ENCODE measurements at regions of chr14 and their contacts with region 1.

Region 1: DNA sequence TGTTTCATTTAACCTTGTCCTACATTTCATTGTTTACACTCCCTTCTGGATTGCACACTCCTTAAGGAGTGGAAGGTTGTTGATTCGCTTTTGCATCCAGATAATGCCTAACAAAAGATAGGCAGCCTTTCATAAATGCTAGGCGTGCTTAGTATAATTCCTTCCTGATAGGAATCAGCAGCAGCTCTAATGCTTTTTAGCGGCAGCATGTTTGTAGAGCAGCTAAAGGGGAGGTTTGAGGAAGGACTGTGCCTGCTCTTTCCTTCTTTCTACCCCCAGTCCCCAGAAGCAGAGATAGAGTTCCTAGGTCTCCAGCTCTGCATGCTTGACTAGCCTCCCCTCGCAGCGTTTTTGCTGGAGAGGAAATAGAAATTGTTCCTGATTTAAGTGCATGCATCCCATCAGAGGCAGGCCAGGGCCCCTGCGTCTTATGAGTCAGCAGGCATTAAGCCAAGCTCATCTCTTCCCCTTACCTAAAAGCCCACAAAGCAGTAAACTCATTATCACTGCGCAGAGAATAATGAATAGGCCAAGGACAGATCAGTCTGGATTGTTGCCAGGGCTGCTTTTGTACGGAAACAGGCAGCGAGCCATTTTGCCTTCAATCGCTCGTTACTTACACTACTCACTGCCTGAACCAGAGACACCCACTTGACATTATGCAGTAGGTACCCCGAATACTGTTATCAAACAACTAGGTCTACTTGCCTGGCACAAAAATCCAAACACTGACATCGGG is 14.0 kb upstream of the TBPL2 start:
- DNase-seq: no peak
- H3K4me3 Mint-ChIP-seq: no peak overlapping the region
- H3K27ac Mint-ChIP-seq: no peak overlapping the region
- H3K4me1 Mint-ChIP-seq: peaks cover 16% of the 10 kb centered on the region
- H3K27me3 Mint-ChIP-seq: peaks cover 13% of the 10 kb centered on the region

Region 2: GRCh38 chr14:55482936-55483605 is 28.6 kb after region 1 on chr14:
- CTCF ChIA-PET with region 1: no interaction called
- POLR2A ChIA-PET with region 1: no interaction called
- intact Hi-C with region 1: no loop called
- DNase-seq: no peak
- H3K4me3 Mint-ChIP-seq: no peak overlapping the region
- H3K27ac Mint-ChIP-seq: no peak overlapping the region
- H3K4me1 Mint-ChIP-seq: no peaks in the 10 kb centered on the region
- H3K27me3 Mint-ChIP-seq: no peaks in the 10 kb centered on the region

Region 3: DNA sequence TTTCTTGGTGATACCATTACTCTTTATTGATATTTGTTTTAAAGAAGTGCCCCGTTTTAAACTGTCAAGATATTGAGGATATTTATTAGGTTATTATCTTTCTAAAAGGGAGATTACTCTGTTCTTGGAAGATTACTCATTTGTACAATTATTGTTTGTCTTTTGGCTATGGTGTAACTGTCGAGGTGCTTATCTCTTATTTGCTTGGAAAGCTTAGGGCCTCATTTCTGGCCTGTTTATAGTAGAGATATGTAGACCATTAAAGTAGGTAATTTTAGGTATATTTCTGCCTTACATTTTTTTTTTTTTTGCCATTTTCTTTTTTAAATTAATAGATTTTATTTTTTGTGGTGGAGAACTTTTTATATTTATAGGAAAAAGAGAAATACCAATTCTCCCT is 199.8 kb after region 1 on chr14:
- CTCF ChIA-PET with region 1: no interaction called
- POLR2A ChIA-PET with region 1: no interaction called
- intact Hi-C with region 1: no loop called
- DNase-seq: no peak
- H3K4me3 Mint-ChIP-seq: no peak overlapping the region
- H3K27ac Mint-ChIP-seq: no peak overlapping the region
- H3K4me1 Mint-ChIP-seq: peaks cover 11% of the 10 kb centered on the region
- H3K27me3 Mint-ChIP-seq: no peaks in the 10 kb centered on the region

Region 4: GRCh38 chr14:55665067-55665675 is 210.7 kb after region 1 on chr14:
- CTCF ChIA-PET with region 1: interaction called, 3 read pairs
- POLR2A ChIA-PET with region 1: no interaction called
- intact Hi-C with region 1: loop called (anchors 1 kb)
- DNase-seq: no peak
- H3K4me3 Mint-ChIP-seq: no peak overlapping the region
- H3K27ac Mint-ChIP-seq: no peak overlapping the region
- H3K4me1 Mint-ChIP-seq: peaks cover 25% of the 10 kb centered on the region
- H3K27me3 Mint-ChIP-seq: no peaks in the 10 kb centered on the region

Region 5: DNA sequence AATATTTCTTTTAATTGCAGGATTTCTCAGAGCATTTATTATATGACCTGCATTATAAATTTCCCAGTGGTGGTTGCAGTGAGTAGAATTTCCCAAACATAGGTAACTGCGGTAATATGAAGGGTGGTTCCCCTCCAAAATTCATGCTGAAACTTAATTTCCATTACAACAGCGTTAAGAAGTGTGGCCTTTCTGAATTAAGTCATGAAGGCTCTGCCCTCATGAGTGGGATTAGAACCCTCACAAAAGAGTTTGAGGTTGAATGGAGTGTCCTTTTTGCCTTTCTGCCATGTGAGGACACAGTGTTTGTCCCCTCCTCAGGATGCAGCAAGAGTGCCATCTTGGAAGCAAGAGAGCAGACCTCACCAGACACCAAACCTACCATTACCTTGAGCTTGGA is 359.2 kb after region 1 on chr14:
- CTCF ChIA-PET with region 1: no interaction called
- POLR2A ChIA-PET with region 1: no interaction called
- intact Hi-C with region 1: loop called (anchors 2 kb)
- DNase-seq: peak; percentile 16
- H3K4me3 Mint-ChIP-seq: no peak overlapping the region
- H3K27ac Mint-ChIP-seq: peak overlapping the region; percentile 61
- H3K4me1 Mint-ChIP-seq: peaks cover 21% of the 10 kb centered on the region
- H3K27me3 Mint-ChIP-seq: no peaks in the 10 kb centered on the region

Measured in activated CD4-positive, alpha-beta memory T cell treated with anti-CD3 and anti-CD28 coated beads for 36 hours (primary cell).